Activated B cell treated with CpG ODN at 0.5 μM for 24 hours (primary cell): ENCODE measurements at regions of chr12 and their contacts with region 1.

Region 1: DNA sequence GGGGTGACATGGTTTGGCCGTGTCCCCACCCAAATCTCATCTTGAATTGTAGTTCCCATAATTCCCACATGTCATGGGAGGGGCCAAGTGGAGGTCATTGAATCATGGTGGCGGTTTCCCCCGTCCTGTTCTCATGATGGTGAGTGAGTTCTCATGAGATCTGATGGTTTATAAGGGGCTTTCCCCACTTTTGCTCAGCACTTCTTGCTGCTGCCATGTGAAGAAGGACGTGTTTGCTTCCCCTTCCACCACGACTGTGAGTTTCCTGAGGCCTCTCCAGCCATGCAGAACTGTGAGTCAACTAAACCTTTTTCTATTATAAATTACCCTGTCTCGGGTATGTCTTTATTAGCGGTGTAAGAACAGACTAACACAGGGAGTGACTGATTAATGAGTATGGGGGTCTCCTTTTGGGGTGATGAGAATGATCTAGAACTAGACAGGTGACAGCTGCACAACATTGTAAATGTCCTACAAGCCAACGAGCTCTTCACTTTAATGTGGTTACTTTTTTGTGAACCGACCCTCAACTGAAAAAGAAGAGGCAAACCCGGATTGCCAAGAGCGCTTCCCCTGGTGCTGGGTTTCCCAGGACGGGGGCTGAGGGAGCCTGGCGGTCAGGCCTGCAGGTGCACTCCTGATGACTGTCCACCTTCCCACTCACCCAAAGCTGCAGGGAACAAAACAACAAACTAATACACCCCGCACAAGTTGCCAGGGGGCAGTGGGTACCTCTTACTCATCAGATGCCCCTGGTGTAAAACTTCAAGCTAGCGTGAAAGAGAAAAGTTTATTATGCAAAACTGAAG is 90.1 kb downstream of the NCOR2 start:
- DNase-seq: no peak
- ATAC-seq: peak; percentile 68
- H3K4me3 Mint-ChIP-seq: peak overlapping the region; percentile 57
- H3K27ac Mint-ChIP-seq: peak overlapping the region; percentile 75
- H3K4me1 Mint-ChIP-seq: peaks cover 55% of the 10 kb centered on the region
- H3K27me3 Mint-ChIP-seq: no peaks in the 10 kb centered on the region
- CTCF ChIP-seq: no peak

Region 2: DNA sequence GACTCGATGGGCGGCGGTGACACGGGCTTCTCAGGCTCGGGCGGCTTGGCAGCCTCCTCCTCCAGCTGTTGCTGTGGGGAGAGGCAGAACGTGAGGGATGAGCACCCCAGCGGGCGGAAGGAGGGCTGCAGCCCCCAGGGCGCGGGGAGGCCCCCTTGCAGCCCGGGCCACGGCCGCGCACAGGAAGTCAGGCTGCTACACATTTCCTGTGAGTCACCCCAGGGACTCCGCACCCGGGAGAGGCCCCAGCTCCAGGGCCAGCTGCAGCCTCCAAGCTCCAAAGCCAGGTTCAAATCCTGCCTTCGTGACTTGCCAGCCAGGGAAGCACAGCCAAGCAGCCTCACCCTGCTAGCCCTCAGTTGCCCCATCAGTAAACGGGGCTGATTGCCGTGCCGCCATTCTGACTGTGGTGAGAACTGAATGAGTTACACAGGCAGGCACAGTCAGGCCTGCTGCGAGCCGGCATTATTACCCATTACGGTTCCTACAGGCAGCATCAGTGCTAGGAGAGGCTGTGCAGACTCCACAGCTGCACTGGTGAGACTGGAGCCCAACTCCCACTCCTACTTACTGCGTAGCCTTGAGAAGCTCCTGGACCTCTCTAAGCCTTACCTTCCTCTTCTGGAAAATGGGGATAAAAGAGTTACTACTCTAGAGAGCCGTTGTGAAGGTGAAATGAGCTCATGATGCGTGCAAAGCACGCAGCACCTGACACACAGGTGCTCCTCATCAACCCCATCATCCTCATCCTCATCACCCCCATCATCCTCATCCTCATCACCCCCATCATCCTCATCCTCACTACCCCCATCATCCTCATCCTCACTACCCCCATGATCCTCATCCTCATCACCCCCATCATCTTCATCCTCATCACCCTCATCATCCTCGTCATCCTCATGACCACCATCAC is 10.8 kb before region 1 on chr12:
- CTCF ChIA-PET with region 1: no interaction called
- POLR2A ChIA-PET with region 1: interaction called, 4 read pairs
- intact Hi-C with region 1: loop called (anchors 1 kb)
- DNase-seq: peak; percentile 79
- ATAC-seq: peak; percentile 97
- H3K4me3 Mint-ChIP-seq: peak overlapping the region; percentile 71
- H3K27ac Mint-ChIP-seq: peak overlapping the region; percentile 77
- H3K4me1 Mint-ChIP-seq: peaks cover 55% of the 10 kb centered on the region
- H3K27me3 Mint-ChIP-seq: no peaks in the 10 kb centered on the region
- CTCF ChIP-seq: no peak

Region 3: DNA sequence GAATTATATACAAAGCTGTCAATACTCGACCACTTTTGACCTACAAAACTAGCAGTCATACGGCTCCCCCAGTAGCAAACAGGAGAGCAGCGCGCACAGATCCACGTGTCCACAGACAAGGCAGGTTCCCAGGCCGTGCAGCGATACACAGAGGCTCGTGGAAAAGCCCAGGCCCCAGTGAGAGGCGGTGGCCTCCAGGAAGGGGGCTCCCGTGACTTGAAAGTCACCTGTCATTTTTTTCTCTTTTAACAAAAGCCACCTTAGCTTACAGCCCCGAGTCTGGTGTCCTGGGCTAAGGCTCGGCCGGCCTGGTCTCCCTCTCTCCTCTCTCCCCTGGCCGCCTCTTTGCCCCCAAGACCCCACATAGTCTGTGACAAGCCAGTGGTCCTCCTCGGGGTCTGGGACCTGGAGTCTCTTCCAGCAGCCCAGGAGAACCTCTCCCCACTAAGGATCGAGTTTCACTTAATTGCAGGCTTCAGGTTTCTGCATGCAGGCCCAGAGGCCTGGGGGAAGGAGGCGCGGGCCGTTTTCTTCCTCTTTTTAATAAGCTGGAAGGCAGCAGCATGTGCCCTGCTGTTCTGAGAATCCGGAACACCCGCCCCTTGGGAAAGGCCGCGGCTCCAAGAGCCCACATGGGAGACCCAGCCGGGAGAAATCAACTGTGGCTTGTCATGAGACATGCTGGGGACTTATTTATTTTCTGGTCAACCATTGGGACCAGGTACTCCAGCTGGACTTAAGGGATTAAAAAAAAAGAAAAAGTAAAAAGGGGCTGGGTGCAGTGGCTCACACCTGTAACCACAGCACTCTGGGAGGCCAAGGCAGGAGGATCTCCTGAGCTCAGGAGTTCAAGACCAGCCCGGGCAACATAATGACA is 74.2 kb after region 1 on chr12:
- CTCF ChIA-PET with region 1: no interaction called
- POLR2A ChIA-PET with region 1: no interaction called
- intact Hi-C with region 1: loop called (anchors 2 kb)
- DNase-seq: peak; percentile 27
- ATAC-seq: peak; percentile 69
- H3K4me3 Mint-ChIP-seq: peak overlapping the region; percentile 80
- H3K27ac Mint-ChIP-seq: peak overlapping the region; percentile 89
- H3K4me1 Mint-ChIP-seq: peaks cover 81% of the 10 kb centered on the region
- H3K27me3 Mint-ChIP-seq: no peaks in the 10 kb centered on the region
- CTCF ChIP-seq: no peak